ENCODE measurements at regions of chr5 and their contacts with region 1.

Region 1: DNA sequence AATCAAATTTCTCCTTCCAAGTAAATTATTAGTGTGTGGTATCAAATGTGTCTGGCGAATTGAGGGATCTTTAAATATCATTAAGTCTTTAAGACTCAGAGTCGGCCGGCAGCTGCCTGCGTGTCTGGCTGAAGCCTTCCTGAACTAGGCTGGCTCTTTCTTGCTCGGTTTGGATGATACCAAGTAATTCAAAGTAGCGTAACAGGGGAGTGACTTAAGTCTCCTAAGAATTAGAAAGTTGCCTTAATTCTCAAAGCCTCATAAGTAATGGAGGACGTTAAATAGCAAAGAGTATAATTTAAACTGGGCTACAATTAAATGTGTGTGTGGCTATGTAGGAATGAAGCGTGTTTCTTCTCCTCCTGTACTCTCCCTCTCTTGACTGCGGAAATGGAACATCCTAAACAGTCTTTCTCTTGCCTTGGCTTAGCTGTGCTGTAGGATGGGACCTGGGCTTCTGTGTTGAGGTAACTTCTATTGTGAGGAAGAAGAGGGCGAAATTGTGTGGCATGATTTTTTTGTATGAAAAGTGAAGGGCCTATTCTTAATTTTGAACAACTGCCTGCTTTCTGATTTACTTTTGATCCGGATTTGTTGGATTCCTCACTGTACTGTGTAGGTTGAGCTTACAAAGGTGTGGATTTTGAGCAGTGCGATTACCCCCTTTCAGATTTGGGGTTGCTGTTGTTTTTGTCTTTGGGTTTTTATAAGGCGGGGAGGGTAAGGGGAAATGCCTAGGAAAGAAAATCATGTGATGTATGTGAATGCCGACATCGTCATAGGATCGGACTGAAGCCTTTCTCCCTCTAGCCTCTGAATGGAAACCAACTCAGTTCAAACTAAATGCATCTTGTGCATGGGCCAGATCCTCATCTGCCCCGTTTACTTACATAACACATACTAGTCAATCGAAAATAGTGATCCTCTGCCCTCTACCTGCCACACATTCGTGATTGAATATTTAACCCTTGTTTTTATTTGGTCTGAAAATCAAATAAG is 29.9 kb downstream of the CPEB4 start:
- DNase-seq: no peak
- ATAC-seq: peak; percentile 92
- H3K4me3 Mint-ChIP-seq: no peak overlapping the region
- H3K27ac Mint-ChIP-seq: no peak overlapping the region
- H3K4me1 Mint-ChIP-seq: peaks cover 24% of the 10 kb centered on the region
- H3K27me3 Mint-ChIP-seq: no peaks in the 10 kb centered on the region
- CTCF ChIP-seq: no peak

Region 2: DNA sequence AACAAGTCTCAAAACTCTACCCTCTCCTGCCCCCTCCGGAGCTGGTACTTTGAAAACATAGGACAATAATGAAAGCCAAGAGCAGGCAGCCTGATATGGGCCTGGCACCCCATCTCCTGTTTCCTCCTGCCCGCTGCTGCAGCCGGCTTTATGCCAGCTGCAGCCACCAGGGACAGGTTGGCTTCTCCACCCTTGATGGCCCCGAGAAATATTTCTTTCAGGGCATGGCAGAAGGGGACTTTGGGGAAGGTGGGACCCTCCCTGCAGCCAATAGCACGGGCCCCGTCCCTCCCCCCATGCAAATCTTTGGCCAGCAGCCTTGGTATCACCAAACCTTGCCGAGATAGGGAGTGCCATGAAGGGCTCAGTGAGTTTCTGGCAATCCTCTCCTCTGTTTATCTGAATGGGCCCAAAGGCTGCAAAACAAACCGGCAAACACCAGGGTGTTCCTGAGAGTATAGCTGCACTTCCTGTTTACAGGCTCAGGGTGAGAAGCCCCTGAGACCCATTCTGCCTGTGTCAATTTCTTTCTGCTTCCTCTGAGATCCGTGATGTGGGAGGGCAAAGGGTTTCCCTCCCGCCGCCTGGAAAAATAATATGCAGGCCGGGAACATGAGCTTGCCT is 228.2 kb before region 1 on chr5:
- CTCF ChIA-PET with region 1: no interaction called
- POLR2A ChIA-PET with region 1: interaction called, 3 read pairs
- intact Hi-C with region 1: loop called (anchors 5 kb)
- DNase-seq: no peak
- ATAC-seq: peak; percentile 80
- H3K4me3 Mint-ChIP-seq: peak overlapping the region; percentile 32
- H3K27ac Mint-ChIP-seq: peak overlapping the region; percentile 81
- H3K4me1 Mint-ChIP-seq: peaks cover 41% of the 10 kb centered on the region
- H3K27me3 Mint-ChIP-seq: no peaks in the 10 kb centered on the region
- CTCF ChIP-seq: no peak

Region 3: DNA sequence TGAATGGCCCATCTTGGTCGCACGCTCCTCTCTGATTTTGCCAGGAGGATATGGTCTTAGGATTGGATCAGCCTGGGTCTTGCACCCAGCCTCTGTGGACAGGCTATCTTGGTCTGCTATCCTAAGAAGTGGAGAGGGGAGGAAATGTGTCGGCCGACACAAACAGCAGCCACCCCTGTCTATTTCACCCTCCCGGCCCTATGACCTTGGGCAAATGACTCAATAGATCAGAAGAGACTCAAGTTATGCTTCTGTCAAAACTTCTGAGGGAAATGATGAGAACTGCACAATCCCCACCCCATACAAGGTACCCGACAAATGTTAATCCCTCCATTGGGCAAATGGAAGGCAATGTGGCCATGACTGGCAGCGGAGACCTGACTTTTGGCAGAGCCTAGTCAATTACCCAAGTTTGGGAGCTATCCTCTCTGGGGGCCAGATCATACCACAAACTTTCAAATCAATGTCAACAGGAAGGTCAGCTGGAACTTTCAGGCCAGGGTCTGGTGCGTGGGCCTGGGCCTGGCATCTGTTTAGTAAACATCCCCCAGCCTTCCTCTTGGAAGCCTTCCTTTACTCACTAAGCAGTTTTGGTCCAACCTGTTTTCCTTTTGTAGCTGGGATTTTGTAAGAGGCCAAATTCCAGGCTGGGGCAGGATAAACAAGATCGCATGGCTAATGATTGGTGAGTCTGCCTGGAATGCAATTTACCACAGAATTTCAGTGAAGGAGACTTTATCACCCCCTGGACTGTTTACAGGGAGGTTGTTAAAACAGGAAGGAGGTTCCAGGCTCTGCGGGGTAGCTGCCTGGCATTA is 94.2 kb before region 1 on chr5:
- CTCF ChIA-PET with region 1: no interaction called
- POLR2A ChIA-PET with region 1: interaction called, 6 read pairs
- intact Hi-C with region 1: loop called (anchors 1 kb)
- DNase-seq: no peak
- ATAC-seq: no peak
- H3K4me3 Mint-ChIP-seq: no peak overlapping the region
- H3K27ac Mint-ChIP-seq: peak overlapping the region; percentile 42
- H3K4me1 Mint-ChIP-seq: peaks cover 86% of the 10 kb centered on the region
- H3K27me3 Mint-ChIP-seq: no peaks in the 10 kb centered on the region
- CTCF ChIP-seq: no peak

Region 4: GRCh38 chr5:173907686-173908371 is 10.3 kb before region 1 on chr5:
- CTCF ChIA-PET with region 1: no interaction called
- POLR2A ChIA-PET with region 1: interaction called, 5 read pairs
- intact Hi-C with region 1: loop called (anchors 1 kb)
- DNase-seq: no peak
- ATAC-seq: no peak
- H3K4me3 Mint-ChIP-seq: no peak overlapping the region
- H3K27ac Mint-ChIP-seq: peak overlapping the region; percentile 16
- H3K4me1 Mint-ChIP-seq: peaks cover 44% of the 10 kb centered on the region
- H3K27me3 Mint-ChIP-seq: no peaks in the 10 kb centered on the region
- CTCF ChIP-seq: no peak

Measured in activated B cell treated with CpG ODN at 0.5 μM for 24 hours (primary cell).